Panc1 (cell line): ENCODE measurements at regions of chr4 and their contacts with region 1.

Region 1: GRCh38 chr4:84492290-84492689 is 6.8 kb downstream of the NKX6-1 start:
- DNase-seq: no peak
- ATAC-seq: no peak
- H3K4me3 ChIP-seq: peak overlapping the region; percentile 32 to 52; a peak in 3 of 4 replicates
- H3K27ac ChIP-seq: no peak overlapping the region
- H3K4me1 ChIP-seq: no peaks in the 10 kb centered on the region
- H3K27me3 ChIP-seq: peaks cover 10% of the 10 kb centered on the region
- CTCF ChIP-seq: no peak

Region 2: DNA sequence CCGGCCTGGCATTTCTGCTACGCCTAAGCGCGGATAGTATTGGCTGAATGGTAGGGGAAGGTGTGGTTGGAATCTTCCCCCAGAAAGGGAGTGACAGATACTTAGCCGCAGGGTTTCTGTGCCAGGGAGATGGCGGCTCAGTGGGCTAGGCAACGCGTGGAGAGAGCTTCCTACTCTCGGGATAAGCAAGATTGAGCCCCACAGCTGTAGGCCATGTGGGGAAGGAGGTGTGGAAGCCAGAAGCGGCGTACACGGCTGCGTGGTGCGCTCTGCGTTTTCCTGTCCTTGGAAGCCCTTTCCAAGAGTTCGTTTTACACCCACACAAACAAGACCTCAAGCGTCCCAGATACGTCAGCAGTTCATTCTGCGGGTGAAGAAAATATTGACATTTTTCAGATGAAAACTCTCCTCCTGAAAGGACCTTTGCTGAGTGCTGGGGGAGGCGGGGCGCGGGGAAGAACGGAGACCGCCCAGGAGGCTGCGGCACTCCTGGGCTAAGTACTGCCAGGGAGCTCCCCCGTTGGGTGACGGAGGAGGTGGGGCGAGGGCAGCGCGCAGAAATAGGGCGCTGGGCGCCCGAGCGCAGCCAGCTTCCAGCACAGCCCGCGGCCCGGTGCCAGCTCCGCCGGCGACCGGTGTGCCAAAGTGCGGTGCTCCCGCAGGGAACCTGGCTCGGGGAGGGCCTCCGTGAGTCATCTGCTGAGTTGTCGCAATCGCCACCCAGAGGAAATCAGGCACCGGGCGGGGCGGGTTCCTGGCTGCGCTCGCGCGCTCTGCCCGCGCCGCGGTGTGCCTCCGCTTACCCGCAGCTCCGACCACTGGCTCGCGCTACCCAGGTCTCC is 956.5 kb before region 1 on chr4 and contains the start of gene GPAT3:
- CTCF ChIA-PET with region 1: no interaction called
- POLR2A ChIA-PET with region 1: interaction called, 10 read pairs
- in situ Hi-C with region 1: no loop called
- intact Hi-C with region 1: no loop called
- DNase-seq: peak; percentile 54
- ATAC-seq: peak; percentile 96
- H3K4me3 ChIP-seq: peak within 1 kb of the TSS; percentile 75 to 91
- H3K27ac ChIP-seq: peak within 1 kb of the TSS; percentile 85
- H3K4me1 ChIP-seq: peaks cover 13% of the 10 kb centered on the region
- H3K27me3 ChIP-seq: no peaks in the 10 kb centered on the region
- CTCF ChIP-seq: no peak
- total RNA-seq, gene GPAT3: 15.1 TPM

Region 3: DNA sequence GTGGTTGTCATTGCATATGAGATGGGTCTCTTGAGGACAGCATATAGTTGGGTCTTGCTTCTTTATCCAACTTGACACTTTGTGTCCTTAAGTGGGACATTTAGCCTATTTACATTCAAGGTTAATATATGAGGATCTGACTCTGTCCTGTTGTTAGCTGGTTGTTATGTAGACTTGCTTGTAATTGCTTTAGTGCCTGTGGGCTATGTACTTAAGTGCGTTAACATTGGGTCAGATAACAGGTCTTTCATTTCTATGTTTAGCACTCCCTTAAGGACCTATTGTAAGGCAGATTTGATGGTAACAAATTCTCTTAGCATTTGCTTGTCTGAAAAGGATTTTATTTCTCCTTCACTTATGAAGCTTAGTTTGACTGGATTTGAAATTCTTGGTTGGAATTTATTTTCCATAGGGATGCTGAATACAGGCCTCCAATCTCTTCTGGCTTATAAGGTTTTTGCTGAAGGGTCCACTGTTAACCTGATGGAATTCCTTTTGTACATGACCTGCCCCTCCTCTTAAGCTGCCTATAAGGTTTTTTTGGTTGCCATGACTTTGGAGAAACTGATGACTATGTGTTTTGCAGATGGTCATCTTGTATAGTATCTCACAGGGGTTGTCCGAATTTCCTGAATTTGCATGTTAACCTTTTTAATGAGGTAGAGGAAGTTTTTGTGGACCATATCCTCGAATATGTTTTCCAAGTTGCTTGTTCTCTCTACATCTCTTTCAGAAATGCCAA is 155.2 kb before region 1 on chr4:
- CTCF ChIA-PET with region 1: no interaction called
- POLR2A ChIA-PET with region 1: no interaction called
- in situ Hi-C with region 1: no loop called
- intact Hi-C with region 1: no loop called
- DNase-seq: no peak
- ATAC-seq: no peak
- H3K4me3 ChIP-seq: no peak overlapping the region
- H3K27ac ChIP-seq: no peak overlapping the region
- H3K4me1 ChIP-seq: no peaks in the 10 kb centered on the region
- H3K27me3 ChIP-seq: no peaks in the 10 kb centered on the region
- CTCF ChIP-seq: no peak